Activated B cell treated with CpG ODN at 0.5 μM for 24 hours (primary cell): ENCODE measurements at regions of chr5 and their contacts with region 1.

Region 1: DNA sequence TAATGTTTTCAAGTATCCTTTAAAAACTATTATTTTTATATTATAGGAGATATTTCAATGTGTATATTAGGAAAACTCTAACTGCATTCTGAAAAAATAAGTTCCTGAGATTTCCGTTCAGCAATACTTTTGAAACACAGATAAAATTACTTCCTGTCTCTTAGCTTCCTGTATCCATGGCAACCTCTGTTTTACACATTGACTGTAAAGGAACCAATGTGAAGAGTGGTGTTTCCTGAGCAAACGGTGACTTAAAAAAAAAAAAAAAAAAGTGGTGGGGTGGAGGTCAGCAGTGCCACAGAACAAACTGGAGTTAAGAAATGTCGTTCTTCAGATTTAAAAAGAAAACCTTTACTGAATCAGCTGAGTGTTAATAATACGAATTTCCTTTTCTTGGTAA is at the start of gene LRRC70:
- DNase-seq: no peak
- ATAC-seq: peak; percentile 68
- H3K4me3 Mint-ChIP-seq: peak within 1 kb of the TSS; percentile 66
- H3K27ac Mint-ChIP-seq: peak within 1 kb of the TSS; percentile 71
- H3K4me1 Mint-ChIP-seq: peaks cover 10% of the 10 kb centered on the region
- H3K27me3 Mint-ChIP-seq: no peaks in the 10 kb centered on the region
- CTCF ChIP-seq: no peak
- total RNA-seq, gene LRRC70: 0.84 and 1.2 TPM in 2 replicates

Region 2: GRCh38 chr5:62412537-62413329 is 165.8 kb before region 1 on chr5 and contains the start of gene IPO11:
- CTCF ChIA-PET with region 1: no interaction called
- POLR2A ChIA-PET with region 1: no interaction called
- intact Hi-C with region 1: loop called (anchors 2 kb)
- DNase-seq: peak; percentile 99
- ATAC-seq: peak; percentile 94
- H3K4me3 Mint-ChIP-seq: peak within 1 kb of the TSS; percentile 92
- H3K27ac Mint-ChIP-seq: peak within 1 kb of the TSS; percentile 87
- H3K4me1 Mint-ChIP-seq: peaks cover 20% of the 10 kb centered on the region
- H3K27me3 Mint-ChIP-seq: no peaks in the 10 kb centered on the region
- CTCF ChIP-seq: no peak
- total RNA-seq, gene IPO11: 32.9 and 34.7 TPM in 2 replicates